WTC11 (cell line): ENCODE measurements at regions of chr5 and their contacts with region 1.

Region 1: DNA sequence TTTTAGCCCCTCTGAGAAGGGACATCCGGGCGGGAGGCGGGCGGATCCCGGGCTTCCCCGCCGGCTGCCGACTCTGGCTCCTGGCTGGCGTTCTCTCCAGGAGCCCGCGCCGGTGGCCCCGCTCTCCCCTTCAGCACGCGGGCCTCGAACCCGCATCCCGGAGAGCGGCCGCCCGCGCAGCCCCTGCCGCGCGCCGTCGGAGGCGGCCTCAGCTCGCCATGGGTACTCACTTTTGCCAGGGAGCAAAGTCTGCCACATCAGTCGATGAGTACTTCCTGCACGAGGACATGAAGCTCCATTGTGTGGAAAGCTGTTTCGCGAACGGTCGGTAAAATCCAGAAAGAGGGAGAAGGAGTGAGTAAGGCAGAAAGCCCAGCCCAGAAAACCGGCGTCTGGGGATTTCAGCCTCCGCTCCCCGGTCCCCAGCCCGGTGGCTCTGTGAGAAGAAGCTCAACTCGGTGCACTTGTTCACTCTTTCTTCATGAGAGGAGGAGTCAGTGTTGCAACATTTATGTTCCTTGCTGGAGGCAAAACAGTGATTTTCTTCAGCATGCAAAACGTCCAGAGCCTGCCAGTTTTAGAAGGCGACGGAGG is at the start of gene PRLR:
- DNase-seq: peak; percentile 29
- ATAC-seq: no peak
- H3K4me3 Mint-ChIP-seq: peak within 1 kb of the TSS; percentile 86
- H3K27ac Mint-ChIP-seq: peak within 1 kb of the TSS; percentile 87
- H3K4me1 Mint-ChIP-seq: peaks cover 29% of the 10 kb centered on the region
- H3K27me3 Mint-ChIP-seq: peaks cover 7% of the 10 kb centered on the region; the same call in 1 of the 2 replicates
- CTCF ChIP-seq: no peak
- total RNA-seq, gene PRLR: 1.9 to 3.2 TPM (median 1.9 TPM) in 3 replicates

Region 2: GRCh38 chr5:35240610-35241291 is 10.6 kb after region 1 on chr5:
- CTCF ChIA-PET with region 1: no interaction called
- POLR2A ChIA-PET with region 1: no interaction called
- DNase-seq: no peak
- ATAC-seq: no peak
- H3K4me3 Mint-ChIP-seq: no peak overlapping the region
- H3K27ac Mint-ChIP-seq: no peak overlapping the region
- H3K4me1 Mint-ChIP-seq: peaks cover 12% of the 10 kb centered on the region
- H3K27me3 Mint-ChIP-seq: no peaks in the 10 kb centered on the region
- CTCF ChIP-seq: no peak

Region 3: DNA sequence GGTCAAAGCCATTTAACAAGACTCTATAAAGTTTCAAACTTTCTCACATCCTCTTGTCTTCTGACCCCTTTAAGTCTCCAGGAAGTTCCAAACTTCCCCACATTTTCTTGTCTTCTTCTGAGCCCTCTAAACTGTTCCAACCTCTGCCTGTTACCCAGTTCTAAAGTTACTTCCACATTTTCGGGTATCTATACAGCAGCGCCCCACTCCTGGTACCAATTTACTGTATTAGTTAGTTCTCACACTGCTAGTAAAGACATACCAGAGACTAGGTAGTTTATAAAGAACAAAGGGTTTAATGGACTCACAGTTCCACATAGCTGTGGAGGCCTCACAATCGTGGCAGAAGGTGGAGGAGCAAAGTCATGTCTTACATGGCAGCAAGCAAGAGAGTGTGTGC is 23.4 kb after region 1 on chr5:
- CTCF ChIA-PET with region 1: no interaction called
- POLR2A ChIA-PET with region 1: no interaction called
- DNase-seq: no peak
- ATAC-seq: no peak
- H3K4me3 Mint-ChIP-seq: no peak overlapping the region
- H3K27ac Mint-ChIP-seq: no peak overlapping the region
- H3K4me1 Mint-ChIP-seq: peaks cover 9% of the 10 kb centered on the region
- H3K27me3 Mint-ChIP-seq: peaks cover 3% of the 10 kb centered on the region; the same call in 1 of the 2 replicates
- CTCF ChIP-seq: no peak

Region 4: GRCh38 chr5:35444196-35444595 is 214.1 kb after region 1 on chr5:
- CTCF ChIA-PET with region 1: interaction called, 11 read pairs
- POLR2A ChIA-PET with region 1: no interaction called
- DNase-seq: no peak
- ATAC-seq: peak; percentile 30; the same call in 1 of the 2 replicates
- H3K4me3 Mint-ChIP-seq: no peak overlapping the region
- H3K27ac Mint-ChIP-seq: no peak overlapping the region
- H3K4me1 Mint-ChIP-seq: no peaks in the 10 kb centered on the region
- H3K27me3 Mint-ChIP-seq: no peaks in the 10 kb centered on the region
- CTCF ChIP-seq: no peak

Region 5: DNA sequence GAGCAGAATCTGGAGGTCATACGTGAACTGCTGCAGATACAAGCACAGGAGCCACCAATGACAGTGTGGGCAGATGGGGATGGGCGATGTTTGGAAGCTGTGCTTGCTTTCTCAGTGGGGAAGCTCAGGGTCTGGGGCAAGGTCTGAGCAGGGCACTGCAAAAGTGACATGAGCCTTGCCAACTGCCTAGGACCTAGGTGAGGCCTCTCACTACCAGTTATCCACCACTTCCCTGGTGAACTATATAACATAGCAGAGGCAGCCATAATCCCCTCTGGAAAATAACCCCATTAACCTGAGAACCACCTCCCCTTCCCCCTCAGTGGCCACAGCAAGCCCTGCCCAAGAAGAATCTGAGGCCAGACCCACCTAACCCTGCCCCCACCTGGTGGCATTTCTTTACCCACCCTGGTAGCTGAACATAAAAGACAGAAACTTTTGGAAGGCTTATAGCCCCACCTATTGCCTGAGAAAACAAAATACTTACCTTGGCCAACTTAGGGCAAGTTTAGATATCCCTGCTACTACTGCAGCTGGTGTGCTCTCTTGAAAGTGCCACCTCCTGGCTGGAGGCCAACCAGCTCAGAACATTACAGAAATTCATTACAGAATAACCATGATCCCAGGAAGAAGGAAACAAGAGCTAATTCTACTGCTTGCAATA is 368.7 kb after region 1 on chr5:
- CTCF ChIA-PET with region 1: interaction called, 22 read pairs
- POLR2A ChIA-PET with region 1: interaction called, 4 read pairs
- DNase-seq: peak; percentile 53
- ATAC-seq: peak; percentile 98
- H3K4me3 Mint-ChIP-seq: no peak overlapping the region
- H3K27ac Mint-ChIP-seq: no peak overlapping the region
- H3K4me1 Mint-ChIP-seq: 0 out of 2 replicates have a peak, but pooled peaks cover 6% of the 10 kb centered on the region
- H3K27me3 Mint-ChIP-seq: peaks cover 8% of the 10 kb centered on the region
- CTCF ChIP-seq: no peak